Transverse colon (tissue), 4 donors: ENCODE measurements at regions of chr19 and their contacts with region 1.

Region 1: GRCh38 chr19:4182084-4182810 is at the starts of genes ANKRD24 and SIRT6:
- DNase-seq: peak; percentile 98
- H3K4me3 ChIP-seq: peak within 1 kb of the TSS; percentile 76 to 96 (median 84)
- H3K27ac ChIP-seq: peak within 1 kb of the TSS; percentile 86 to 95 (median 88)
- H3K4me1 ChIP-seq: peaks cover 12 to 26% (median 22%) of the 10 kb centered on the region in 4 donors
- H3K27me3 ChIP-seq: no peaks in the 10 kb centered on the region
- CTCF ChIP-seq: no peak
- EP300 ChIP-seq: no peak
- POLR2A ChIP-seq: peak; percentile 88
- total RNA-seq, gene ANKRD24: 1.2 to 6.4 (median 2.1) TPM
- total RNA-seq, gene SIRT6: 141 to 215 (median 194) TPM

Region 2: GRCh38 chr19:2282062-2282861 is 1900.0 kb before region 1 on chr19 and contains the start of gene PEAK3:
- in situ Hi-C with region 1: no loop called
- intact Hi-C with region 1: loop called (anchors 10 kb)
- DNase-seq: peak; percentile 79
- H3K4me3 ChIP-seq: peak within 1 kb of the TSS in 3 of 4 donors; percentile 1 to 38 (median 26)
- H3K27ac ChIP-seq: peak within 1 kb of the TSS; percentile 22 to 56 (median 42)
- H3K4me1 ChIP-seq: peaks cover 0 to 23% (median 11%) of the 10 kb centered on the region in 4 donors
- H3K27me3 ChIP-seq: peaks cover 36% of the 10 kb centered on the region
- CTCF ChIP-seq: no peak
- EP300 ChIP-seq: no peak
- POLR2A ChIP-seq: no peak
- total RNA-seq, gene PEAK3: 0.27 to 1.1 (median 1.1) TPM in 3 of 4 donors, not detected in the other

Region 3: DNA sequence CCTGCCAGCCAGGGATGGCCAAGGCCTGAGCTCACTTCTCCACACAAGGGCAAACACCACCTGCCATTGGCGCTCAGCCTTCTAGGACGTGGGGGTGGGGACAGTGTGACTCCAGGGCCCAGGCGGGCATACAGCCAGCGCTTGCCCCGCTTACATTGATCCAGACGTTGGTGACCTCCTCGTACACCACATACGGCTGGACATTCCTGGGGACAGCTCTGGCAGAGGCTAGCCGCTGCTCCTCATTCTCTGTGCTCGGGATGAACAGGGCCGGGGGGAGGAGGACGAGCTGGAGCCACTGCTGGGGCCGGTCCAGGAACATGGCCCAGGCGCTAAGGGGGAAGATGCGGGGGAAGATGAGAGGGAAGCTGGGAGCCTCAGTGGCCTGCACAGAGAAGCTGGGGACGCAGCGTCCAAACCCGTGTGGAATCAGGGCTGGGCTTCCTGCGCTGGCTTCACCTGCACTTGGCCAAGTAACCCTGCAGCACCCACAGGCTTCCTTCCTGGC is 513.0 kb after region 1 on chr19:
- in situ Hi-C with region 1: no loop called
- intact Hi-C with region 1: loop called (anchors 5 kb)
- DNase-seq: no peak
- H3K4me3 ChIP-seq: no peak overlapping the region
- H3K27ac ChIP-seq: peak overlapping the region in 3 of 4 donors; percentile 27 to 60 (median 37)
- H3K4me1 ChIP-seq: no peaks in the 10 kb centered on the region
- H3K27me3 ChIP-seq: no peaks in the 10 kb centered on the region
- CTCF ChIP-seq: no peak
- EP300 ChIP-seq: no peak
- POLR2A ChIP-seq: no peak